ENCODE measurements at regions of chr14 and their contacts with region 1.

Region 1: GRCh38 chr14:99760817-99761216 is 32.4 kb upstream of the EML1 start:
- DNase-seq: peak; percentile 78
- H3K4me3 ChIP-seq: no peak overlapping the region
- H3K27ac ChIP-seq: peak overlapping the region; percentile 34 to 92 (median 82)
- H3K4me1 ChIP-seq: peaks cover 0 to 57% (median 56%) of the 10 kb centered on the region in 4 donors
- H3K27me3 ChIP-seq: no peaks in the 10 kb centered on the region
- CTCF ChIP-seq: no peak
- EP300 ChIP-seq: peak in 2 of 4 donors; percentile 38 to 66
- POLR2A ChIP-seq: no peak

Region 2: GRCh38 chr14:99246536-99247097 is 514.2 kb before region 1 on chr14:
- intact Hi-C with region 1: no loop called
- DNase-seq: no peak
- H3K4me3 ChIP-seq: peak overlapping the region in 2 of 4 donors; percentile 8 to 25
- H3K27ac ChIP-seq: no peak overlapping the region
- H3K4me1 ChIP-seq: peaks cover 0 to 16% (median 13%) of the 10 kb centered on the region in 4 donors
- H3K27me3 ChIP-seq: peaks cover 22 to 81% (median 32%) of the 10 kb centered on the region in 3 donors
- CTCF ChIP-seq: no peak
- EP300 ChIP-seq: no peak
- POLR2A ChIP-seq: no peak

Region 3: DNA sequence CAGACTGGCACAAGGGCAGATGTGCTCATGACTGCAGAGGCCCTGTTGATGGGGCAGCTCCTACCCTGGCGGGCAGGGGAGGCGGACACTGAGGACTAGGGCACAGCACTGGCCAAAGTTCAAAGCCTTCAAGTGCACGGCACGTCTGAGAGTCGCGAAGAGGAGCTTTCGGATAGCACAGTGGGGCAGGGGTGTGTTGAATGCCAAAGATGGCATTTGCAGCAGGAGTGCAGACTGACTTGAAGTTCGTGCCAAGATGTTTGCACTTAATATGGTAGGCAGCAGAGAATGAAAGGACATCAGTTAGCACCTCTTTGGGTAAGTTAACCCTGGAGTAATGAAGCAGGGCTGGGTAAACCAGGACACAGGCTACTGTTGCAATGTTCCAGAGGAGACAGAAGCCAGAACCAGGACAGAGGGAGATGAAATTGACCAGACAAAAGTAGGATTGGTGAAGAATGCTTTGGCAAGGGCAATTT is 25.7 kb after region 1 on chr14:
- intact Hi-C with region 1: loop called (anchors 2 kb)
- DNase-seq: no peak
- H3K4me3 ChIP-seq: no peak overlapping the region
- H3K27ac ChIP-seq: peak overlapping the region; percentile 68 to 97 (median 94)
- H3K4me1 ChIP-seq: peaks cover 0 to 81% (median 68%) of the 10 kb centered on the region in 4 donors
- H3K27me3 ChIP-seq: no peaks in the 10 kb centered on the region
- CTCF ChIP-seq: no peak
- EP300 ChIP-seq: peak in 3 of 4 donors; percentile 54 to 95 (median 90)
- POLR2A ChIP-seq: no peak

Measured in sigmoid colon (tissue), 7 donors.